Natural killer cell (primary cell): ENCODE measurements at regions of chr16 and their contacts with region 1.

Region 1: GRCh38 chr16:3819746-3820724 is 60.5 kb downstream of the CREBBP start:
- DNase-seq: peak in 1 of 2 donors; percentile 69
- ATAC-seq: peak in 1 of 3 donors; percentile 15
- H3K4me3 ChIP-seq: no peak overlapping the region
- H3K4me3 Mint-ChIP-seq: peak overlapping the region; percentile 86
- H3K27ac ChIP-seq: no peak overlapping the region
- H3K27ac Mint-ChIP-seq: peak overlapping the region; percentile 82 to 88
- H3K4me1 ChIP-seq: peaks cover 80% of the 10 kb centered on the region
- H3K4me1 Mint-ChIP-seq: peaks cover 91 to 95% of the 10 kb centered on the region in 2 donors
- H3K27me3 ChIP-seq: no peaks in the 10 kb centered on the region
- H3K27me3 Mint-ChIP-seq: no peaks in the 10 kb centered on the region
- CTCF ChIP-seq: no peak

Region 2: DNA sequence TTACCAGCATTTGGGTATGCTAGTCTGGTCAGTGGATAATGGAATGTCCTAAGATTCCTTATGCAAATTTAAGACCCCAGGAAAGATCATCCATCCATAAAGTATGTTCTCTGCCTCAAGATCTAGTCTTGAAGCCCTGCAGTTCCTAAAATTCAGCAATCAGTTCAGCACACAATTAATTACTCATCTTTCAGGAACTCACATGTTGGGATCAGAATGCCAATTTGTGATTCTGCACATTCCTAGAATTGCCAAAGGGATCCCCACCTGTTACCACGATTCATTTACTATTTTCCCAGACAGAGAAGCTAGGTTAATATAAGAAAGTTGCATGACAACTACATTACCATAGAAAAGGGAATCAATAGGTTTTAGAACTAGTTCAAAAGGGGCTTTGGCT is 461.2 kb before region 1 on chr16:
- intact Hi-C with region 1: no loop called
- DNase-seq: no peak
- ATAC-seq: no peak
- H3K4me3 ChIP-seq: no peak overlapping the region
- H3K4me3 Mint-ChIP-seq: no peak overlapping the region
- H3K27ac ChIP-seq: no peak overlapping the region
- H3K27ac Mint-ChIP-seq: no peak overlapping the region
- H3K4me1 ChIP-seq: no peaks in the 10 kb centered on the region
- H3K4me1 Mint-ChIP-seq: peaks cover 0 to 3% of the 10 kb centered on the region in 2 donors
- H3K27me3 ChIP-seq: peaks cover 12% of the 10 kb centered on the region
- H3K27me3 Mint-ChIP-seq: peaks cover 20 to 52% of the 10 kb centered on the region in 2 donors
- CTCF ChIP-seq: no peak

Region 3: DNA sequence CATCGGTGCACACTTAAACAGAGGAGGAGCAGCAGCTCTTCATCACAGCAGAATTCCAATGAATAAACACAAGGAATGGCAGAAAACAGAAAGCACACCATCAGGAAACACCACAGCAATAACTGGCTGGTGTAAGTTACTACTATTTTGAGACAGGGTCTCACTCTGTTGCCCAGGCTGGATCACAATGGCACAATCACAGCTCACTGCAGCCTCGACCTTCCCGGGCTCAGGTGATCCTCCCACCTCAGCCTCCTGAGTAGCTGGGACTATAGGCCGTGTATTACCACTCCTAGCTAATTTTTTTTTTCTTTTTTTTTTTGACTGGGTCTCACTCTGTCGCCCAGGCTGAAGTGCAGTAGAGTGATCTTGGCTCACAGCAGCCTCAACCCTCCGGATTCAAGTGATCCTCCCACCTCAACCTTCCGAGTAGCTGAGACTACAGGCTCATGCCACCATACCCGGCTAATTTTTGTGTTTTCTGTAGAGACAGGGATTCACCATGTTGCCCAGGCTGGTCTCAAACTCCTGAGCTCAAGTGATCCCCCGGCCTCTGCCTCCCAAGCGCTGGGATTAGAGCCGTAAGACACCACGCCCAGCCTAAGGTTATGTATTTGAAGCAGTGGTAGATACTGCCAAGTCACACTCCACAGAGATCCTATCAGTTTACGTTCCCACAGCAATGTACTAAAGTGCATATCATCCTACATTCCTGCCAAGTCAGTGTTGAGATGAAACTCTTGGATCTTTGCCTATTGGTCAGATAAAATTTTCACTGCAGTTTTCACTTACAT is 123.4 kb before region 1 on chr16:
- intact Hi-C with region 1: no loop called
- DNase-seq: no peak
- ATAC-seq: no peak
- H3K4me3 ChIP-seq: no peak overlapping the region
- H3K4me3 Mint-ChIP-seq: no peak overlapping the region
- H3K27ac ChIP-seq: no peak overlapping the region
- H3K27ac Mint-ChIP-seq: no peak overlapping the region
- H3K4me1 ChIP-seq: peaks cover 12% of the 10 kb centered on the region
- H3K4me1 Mint-ChIP-seq: peaks cover 0 to 4% of the 10 kb centered on the region in 2 donors
- H3K27me3 ChIP-seq: no peaks in the 10 kb centered on the region
- H3K27me3 Mint-ChIP-seq: no peaks in the 10 kb centered on the region
- CTCF ChIP-seq: no peak

Region 4: GRCh38 chr16:3787924-3788661 is 31.9 kb before region 1 on chr16:
- intact Hi-C with region 1: loop called (anchors 1 kb)
- DNase-seq: no peak
- ATAC-seq: no peak
- H3K4me3 ChIP-seq: no peak overlapping the region
- H3K4me3 Mint-ChIP-seq: no peak overlapping the region
- H3K27ac ChIP-seq: no peak overlapping the region
- H3K27ac Mint-ChIP-seq: no peak overlapping the region
- H3K4me1 ChIP-seq: peaks cover 39% of the 10 kb centered on the region
- H3K4me1 Mint-ChIP-seq: peaks cover 53 to 63% of the 10 kb centered on the region in 2 donors
- H3K27me3 ChIP-seq: no peaks in the 10 kb centered on the region
- H3K27me3 Mint-ChIP-seq: no peaks in the 10 kb centered on the region
- CTCF ChIP-seq: no peak

Region 5: GRCh38 chr16:3797904-3798811 is 21.9 kb before region 1 on chr16:
- intact Hi-C with region 1: loop called (anchors 2 kb)
- DNase-seq: peak in 1 of 2 donors; percentile 24
- ATAC-seq: peak in 2 of 3 donors; percentile 34 to 35
- H3K4me3 ChIP-seq: no peak overlapping the region
- H3K4me3 Mint-ChIP-seq: peak overlapping the region; percentile 79
- H3K27ac ChIP-seq: no peak overlapping the region
- H3K27ac Mint-ChIP-seq: peak overlapping the region in 1 of 2 donors; percentile 23
- H3K4me1 ChIP-seq: peaks cover 47% of the 10 kb centered on the region
- H3K4me1 Mint-ChIP-seq: peaks cover 78 to 82% of the 10 kb centered on the region in 2 donors
- H3K27me3 ChIP-seq: no peaks in the 10 kb centered on the region
- H3K27me3 Mint-ChIP-seq: no peaks in the 10 kb centered on the region
- CTCF ChIP-seq: no peak

Region 6: DNA sequence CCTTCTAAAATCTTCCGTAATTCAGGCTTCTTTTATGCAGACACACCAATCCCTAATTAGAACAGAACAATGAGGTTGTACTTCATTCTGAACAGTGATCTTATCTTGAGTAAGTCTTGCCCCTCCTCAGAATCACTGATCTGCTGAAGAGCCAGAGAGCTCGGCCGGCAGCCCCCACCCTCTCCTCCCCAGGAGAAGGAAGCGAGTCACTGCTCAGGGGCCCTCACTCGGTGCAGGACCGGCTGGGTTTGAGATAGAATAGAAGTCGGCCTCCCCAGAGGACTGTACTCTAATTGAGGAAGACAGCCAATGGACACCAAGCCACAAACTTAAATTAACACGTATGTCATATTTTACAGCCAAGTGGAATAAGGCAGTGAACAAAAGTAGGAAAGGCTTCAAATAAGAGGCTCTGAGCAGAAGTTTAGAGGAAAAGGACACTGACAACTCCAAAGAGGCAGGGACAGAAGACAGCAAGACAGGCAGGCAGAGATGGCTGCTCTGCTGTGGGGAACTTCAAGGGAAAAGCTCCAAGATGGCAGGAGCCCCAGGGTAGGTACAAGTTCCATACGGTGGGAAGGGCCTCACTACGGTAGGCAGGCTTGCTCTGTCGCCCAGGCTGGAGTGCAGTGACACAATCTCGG is 41.9 kb after region 1 on chr16:
- intact Hi-C with region 1: loop called (anchors 5 kb)
- DNase-seq: no peak
- ATAC-seq: peak; percentile 23 to 46 (median 32)
- H3K4me3 ChIP-seq: no peak overlapping the region
- H3K4me3 Mint-ChIP-seq: peak overlapping the region; percentile 40
- H3K27ac ChIP-seq: no peak overlapping the region
- H3K27ac Mint-ChIP-seq: peak overlapping the region; percentile 61 to 63
- H3K4me1 ChIP-seq: peaks cover 65% of the 10 kb centered on the region
- H3K4me1 Mint-ChIP-seq: peaks cover 88% of the 10 kb centered on the region in 2 donors
- H3K27me3 ChIP-seq: no peaks in the 10 kb centered on the region
- H3K27me3 Mint-ChIP-seq: no peaks in the 10 kb centered on the region
- CTCF ChIP-seq: no peak

Region 7: DNA sequence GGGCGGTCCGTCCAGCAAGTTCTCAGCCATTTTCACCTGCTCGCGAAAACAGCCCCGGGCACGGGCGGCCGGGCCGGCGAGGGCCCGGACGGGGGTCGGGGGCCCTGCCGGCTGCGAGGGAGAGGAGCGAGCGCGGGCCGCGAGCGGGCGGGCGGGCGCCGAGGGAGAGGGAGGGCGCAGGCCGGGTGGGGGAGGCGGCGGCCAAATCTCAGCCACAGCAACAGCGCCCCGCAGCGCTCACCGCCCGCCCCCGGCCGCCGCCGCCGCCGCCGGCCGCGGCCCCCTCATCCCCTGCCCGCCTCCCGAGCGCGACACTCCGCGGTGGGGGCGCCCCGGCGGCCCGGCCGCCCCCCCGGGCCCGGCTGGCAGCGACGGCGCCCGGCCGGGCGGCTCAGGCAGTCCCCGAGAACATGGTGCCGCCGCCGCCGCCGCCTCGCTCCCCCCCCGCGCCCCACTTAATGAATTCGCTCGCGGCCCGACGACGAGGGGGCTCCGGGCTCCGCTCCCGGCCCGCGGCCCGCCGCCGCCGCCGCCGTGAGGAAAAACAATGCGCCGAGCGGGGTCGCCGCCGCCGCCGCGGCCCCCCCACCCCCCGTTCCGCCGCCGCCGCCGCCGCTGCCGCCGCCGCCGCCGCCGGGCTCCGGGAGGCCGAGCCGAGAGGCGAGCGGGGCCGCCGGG is 60.0 kb after region 1 on chr16:
- intact Hi-C with region 1: loop called (anchors 5 kb)
- DNase-seq: peak; percentile 78 to 85
- ATAC-seq: peak; percentile 67 to 78 (median 70)
- H3K4me3 ChIP-seq: peak overlapping the region; percentile 57
- H3K4me3 Mint-ChIP-seq: peak overlapping the region; percentile 94
- H3K27ac ChIP-seq: no peak overlapping the region
- H3K27ac Mint-ChIP-seq: peak overlapping the region in 1 of 2 donors; percentile 83
- H3K4me1 ChIP-seq: peaks cover 43% of the 10 kb centered on the region
- H3K4me1 Mint-ChIP-seq: peaks cover 48 to 49% of the 10 kb centered on the region in 2 donors
- H3K27me3 ChIP-seq: peaks cover 3% of the 10 kb centered on the region
- H3K27me3 Mint-ChIP-seq: peaks cover 11 to 21% of the 10 kb centered on the region in 2 donors
- CTCF ChIP-seq: no peak

Region 8: GRCh38 chr16:4081521-4082021 is 261.5 kb after region 1 on chr16:
- intact Hi-C with region 1: no loop called
- DNase-seq: peak in 1 of 2 donors; percentile 74
- ATAC-seq: peak in 2 of 3 donors; percentile 33 to 36
- H3K4me3 ChIP-seq: no peak overlapping the region
- H3K4me3 Mint-ChIP-seq: peak overlapping the region; percentile 13
- H3K27ac ChIP-seq: no peak overlapping the region
- H3K27ac Mint-ChIP-seq: peak overlapping the region in 1 of 2 donors; percentile 63
- H3K4me1 ChIP-seq: peaks cover 18% of the 10 kb centered on the region
- H3K4me1 Mint-ChIP-seq: peaks cover 30 to 39% of the 10 kb centered on the region in 2 donors
- H3K27me3 ChIP-seq: no peaks in the 10 kb centered on the region
- H3K27me3 Mint-ChIP-seq: no peaks in the 10 kb centered on the region
- CTCF ChIP-seq: no peak